HCT116 (cell line): ENCODE measurements at regions of chr1 and their contacts with region 1.

Region 1: GRCh38 chr1:91282695-91283420 is 121.8 kb downstream of the HFM1 start:
- DNase-seq: peak; percentile 71
- ATAC-seq: peak; percentile 83
- H3K4me3 ChIP-seq: no peak overlapping the region
- H3K27ac ChIP-seq: no peak overlapping the region
- H3K4me1 ChIP-seq: peaks cover 2 to 7% of the 10 kb centered on the region in 2 experiments; a peak in 2 of 4 replicates
- H3K27me3 ChIP-seq: no peaks in the 10 kb centered on the region
- CTCF ChIP-seq: peak; percentile 71 to 82 (median 80)
- POLR2A ChIP-seq: no peak
- RAD21 ChIP-seq: peak; percentile 90

Region 2: DNA sequence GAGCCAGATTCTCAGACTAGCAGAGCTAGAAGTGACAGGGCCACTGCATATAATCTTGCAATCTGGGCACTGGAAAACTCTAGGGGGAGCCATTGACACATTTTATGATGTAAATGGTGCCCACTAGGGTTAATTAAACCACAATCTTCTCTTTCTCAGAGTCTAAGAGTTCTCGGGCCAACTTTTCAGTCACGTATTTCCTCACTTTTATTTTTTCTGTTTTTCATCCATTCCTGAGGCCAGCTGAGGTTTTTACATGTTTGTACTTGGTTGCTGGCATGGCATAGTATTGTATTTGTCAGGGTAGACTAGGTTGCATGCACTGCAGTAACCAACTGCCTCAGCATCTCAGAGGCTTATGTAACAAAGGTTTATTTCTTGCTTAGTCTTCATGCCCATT is 1149.7 kb before region 1 on chr1:
- CTCF ChIA-PET with region 1: interaction called, 3 read pairs
- POLR2A ChIA-PET with region 1: no interaction called
- RAD21 ChIA-PET with region 1: no interaction called
- intact Hi-C with region 1: loop called (anchors 2 kb)
- DNase-seq: peak; percentile 31
- ATAC-seq: peak; percentile 88
- H3K4me3 ChIP-seq: no peak overlapping the region
- H3K27ac ChIP-seq: no peak overlapping the region
- H3K4me1 ChIP-seq: no peaks in the 10 kb centered on the region
- H3K27me3 ChIP-seq: peaks cover 17% of the 10 kb centered on the region; the same call in 1 of the 2 replicates
- CTCF ChIP-seq: peak; percentile 49 to 67 (median 55); a peak in 5 of 6 replicates
- POLR2A ChIP-seq: no peak
- RAD21 ChIP-seq: peak; percentile 71

Region 3: GRCh38 chr1:91314643-91315042 is 31.8 kb after region 1 on chr1:
- CTCF ChIA-PET with region 1: no interaction called
- POLR2A ChIA-PET with region 1: no interaction called
- RAD21 ChIA-PET with region 1: no interaction called
- intact Hi-C with region 1: no loop called
- DNase-seq: no peak
- ATAC-seq: no peak
- H3K4me3 ChIP-seq: no peak overlapping the region
- H3K27ac ChIP-seq: no peak overlapping the region
- H3K4me1 ChIP-seq: no peaks in the 10 kb centered on the region
- H3K27me3 ChIP-seq: no peaks in the 10 kb centered on the region
- CTCF ChIP-seq: no peak
- POLR2A ChIP-seq: no peak
- RAD21 ChIP-seq: no peak

Region 4: GRCh38 chr1:91404151-91405012 is 121.5 kb after region 1 on chr1 and contains the start of gene HFM1:
- CTCF ChIA-PET with region 1: interaction called, 14 read pairs
- POLR2A ChIA-PET with region 1: no interaction called
- RAD21 ChIA-PET with region 1: no interaction called
- intact Hi-C with region 1: loop called (anchors 1 kb)
- DNase-seq: peak; percentile 41
- ATAC-seq: peak; percentile 93
- H3K4me3 ChIP-seq: peak within 1 kb of the TSS; percentile 50 to 58
- H3K27ac ChIP-seq: no peak within 1 kb of the TSS; the same call in 1 of the 2 replicates
- H3K4me1 ChIP-seq: peaks cover 0 to 3% of the 10 kb centered on the region in 2 experiments; a peak in 1 of 4 replicates
- H3K27me3 ChIP-seq: no peaks in the 10 kb centered on the region
- CTCF ChIP-seq: no peak
- POLR2A ChIP-seq: no peak
- RAD21 ChIP-seq: no peak
- total RNA-seq, gene HFM1: 0.07 TPM

Region 5: GRCh38 chr1:91924146-91924545 is 641.3 kb after region 1 on chr1:
- CTCF ChIA-PET with region 1: no interaction called
- POLR2A ChIA-PET with region 1: no interaction called
- RAD21 ChIA-PET with region 1: no interaction called
- intact Hi-C with region 1: loop called (anchors 2 kb)
- DNase-seq: no peak
- ATAC-seq: no peak
- H3K4me3 ChIP-seq: no peak overlapping the region
- H3K27ac ChIP-seq: no peak overlapping the region
- H3K4me1 ChIP-seq: peaks cover 4 to 9% of the 10 kb centered on the region in 2 experiments; a peak in 1 of 4 replicates
- H3K27me3 ChIP-seq: no peaks in the 10 kb centered on the region
- CTCF ChIP-seq: no peak
- POLR2A ChIP-seq: no peak
- RAD21 ChIP-seq: no peak